Lower leg skin (tissue), 4 donors: ENCODE measurements at regions of chr6 and their contacts with region 1.

Region 1: DNA sequence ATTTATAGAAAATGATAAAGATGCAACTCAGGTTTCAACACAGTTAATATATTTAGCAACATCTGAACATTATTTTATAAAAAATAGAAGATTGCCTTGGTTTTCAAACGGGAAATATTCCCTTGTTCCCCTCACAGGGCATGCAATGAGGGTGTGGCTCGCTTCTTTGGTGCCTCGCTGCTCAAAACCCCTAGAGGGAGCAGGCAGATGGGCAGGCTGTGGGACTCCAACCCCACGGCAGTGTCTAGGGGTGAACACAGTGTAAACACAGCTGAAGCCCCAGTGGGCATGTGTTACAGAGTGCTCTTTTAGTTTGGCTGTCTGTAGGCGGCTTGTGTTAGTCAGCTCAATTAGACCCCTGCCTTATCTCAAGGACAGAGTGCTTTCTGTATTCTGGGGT is 560.8 kb upstream of the IMPG1 start:
- DNase-seq: no peak
- H3K4me3 ChIP-seq: no peak overlapping the region
- CTCF ChIP-seq: no peak
- POLR2A ChIP-seq: no peak

Region 2: DNA sequence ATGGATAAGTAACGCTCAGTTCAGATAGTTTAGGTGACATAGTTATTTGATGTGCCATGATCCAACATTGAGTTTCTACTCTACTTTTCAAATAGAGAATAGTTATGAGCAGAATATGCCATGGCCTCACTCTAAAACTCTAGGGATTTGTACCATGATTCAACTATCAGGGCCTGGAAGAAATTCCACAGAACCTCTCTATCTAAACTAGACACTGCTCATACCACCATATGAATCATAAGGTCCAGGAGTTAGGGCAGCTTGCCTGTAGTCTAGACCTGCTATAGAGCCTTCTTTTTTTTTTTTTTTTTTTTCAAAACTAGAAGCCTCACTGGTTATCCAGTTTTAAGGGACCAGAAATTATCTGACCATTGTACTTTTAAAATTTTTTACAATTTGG is 11.0 kb after region 1 on chr6:
- intact Hi-C with region 1: loop called (anchors 1 kb)
- DNase-seq: no peak
- H3K4me3 ChIP-seq: no peak overlapping the region
- CTCF ChIP-seq: no peak
- POLR2A ChIP-seq: no peak

Region 3: GRCh38 chr6:76862936-76863335 is 229.7 kb after region 1 on chr6:
- intact Hi-C with region 1: no loop called
- DNase-seq: no peak
- H3K4me3 ChIP-seq: no peak overlapping the region
- CTCF ChIP-seq: no peak
- POLR2A ChIP-seq: no peak